ENCODE measurements at regions of chr12 and their contacts with region 1.

Region 1: DNA sequence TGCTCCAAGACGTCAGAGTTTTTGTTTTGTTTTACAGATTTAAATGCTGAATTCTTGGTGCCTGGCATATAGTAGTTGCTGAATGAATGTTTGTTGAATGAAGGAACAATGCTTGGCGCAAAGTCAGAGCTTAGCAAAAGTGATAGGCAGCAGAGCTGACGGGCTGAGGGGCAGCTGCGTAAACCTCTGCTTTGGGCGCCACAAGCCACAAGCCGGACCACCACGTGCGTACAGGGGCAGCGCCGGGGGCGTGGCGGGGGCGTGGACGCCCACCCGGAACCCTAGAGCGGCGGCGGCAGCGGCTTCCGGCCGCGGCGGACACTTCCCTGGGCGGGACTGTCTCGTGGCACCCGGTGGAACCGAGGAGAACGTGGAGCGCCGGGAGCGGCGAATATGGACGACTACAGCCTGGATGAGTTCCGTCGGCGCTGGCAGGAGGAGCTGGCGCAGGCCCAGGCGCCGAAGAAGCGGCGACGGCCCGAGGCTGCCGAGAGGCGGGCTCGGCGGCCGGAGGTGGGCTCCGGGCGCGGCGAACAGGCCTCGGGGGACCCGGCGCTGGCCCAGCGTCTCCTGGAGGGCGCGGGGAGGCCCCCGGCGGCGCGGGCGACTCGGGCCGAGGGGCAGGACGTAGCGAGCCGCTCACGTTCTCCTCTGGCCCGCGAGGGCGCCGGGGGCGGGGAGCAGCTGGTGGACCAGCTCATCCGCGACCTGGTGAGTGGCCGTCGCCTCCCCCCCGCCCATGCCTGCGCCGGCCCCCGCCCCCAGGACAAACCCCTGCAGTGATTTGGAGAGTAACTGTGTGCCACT is at the start of gene FBXW8:
- DNase-seq: peak; percentile 84
- H3K4me3 ChIP-seq: peak within 1 kb of the TSS; percentile 79
- H3K27ac ChIP-seq: peak within 1 kb of the TSS; percentile 46
- H3K4me1 ChIP-seq: peaks cover 20% of the 10 kb centered on the region
- CTCF ChIP-seq: no peak
- total RNA-seq, gene FBXW8: 22.4 and 34.0 TPM in 2 replicates

Region 2: DNA sequence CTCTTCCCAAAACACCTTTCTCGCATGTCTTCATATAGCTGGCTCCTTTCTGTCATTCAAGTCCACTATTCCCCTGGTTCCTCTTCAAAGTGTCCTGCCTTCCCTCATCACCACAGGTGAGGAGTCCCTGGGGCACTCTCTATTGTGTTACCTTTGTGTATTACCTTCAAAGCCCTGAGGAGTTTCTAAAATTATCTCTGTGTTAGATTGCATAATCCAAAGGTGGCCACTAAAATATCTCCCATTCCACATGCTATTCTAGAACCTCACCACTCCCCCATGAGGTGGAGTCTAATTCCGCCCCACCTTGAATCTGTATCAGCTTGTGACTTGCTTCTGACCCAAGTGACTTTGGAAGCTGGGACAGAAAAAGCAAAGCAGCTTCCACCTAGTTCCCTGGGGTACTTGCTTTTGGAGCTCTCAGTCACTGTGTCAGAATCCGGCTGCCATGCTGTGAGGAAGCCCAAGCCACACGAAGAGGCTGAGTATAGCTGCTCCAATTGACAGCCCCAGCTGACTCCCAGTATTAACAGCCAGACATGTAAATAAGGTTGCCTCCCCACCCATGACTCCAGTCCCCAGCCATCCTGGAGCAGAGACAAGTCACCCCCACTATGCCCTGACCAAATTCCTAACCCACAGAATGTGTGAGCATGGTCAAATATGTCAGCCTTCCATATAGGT is 36.4 kb before region 1 on chr12:
- CTCF ChIA-PET with region 1: no interaction called
- POLR2A ChIA-PET with region 1: no interaction called
- intact Hi-C with region 1: no loop called
- DNase-seq: no peak
- H3K4me3 ChIP-seq: no peak overlapping the region
- H3K27ac ChIP-seq: no peak overlapping the region
- H3K4me1 ChIP-seq: peaks cover 29% of the 10 kb centered on the region
- CTCF ChIP-seq: no peak

Region 3: DNA sequence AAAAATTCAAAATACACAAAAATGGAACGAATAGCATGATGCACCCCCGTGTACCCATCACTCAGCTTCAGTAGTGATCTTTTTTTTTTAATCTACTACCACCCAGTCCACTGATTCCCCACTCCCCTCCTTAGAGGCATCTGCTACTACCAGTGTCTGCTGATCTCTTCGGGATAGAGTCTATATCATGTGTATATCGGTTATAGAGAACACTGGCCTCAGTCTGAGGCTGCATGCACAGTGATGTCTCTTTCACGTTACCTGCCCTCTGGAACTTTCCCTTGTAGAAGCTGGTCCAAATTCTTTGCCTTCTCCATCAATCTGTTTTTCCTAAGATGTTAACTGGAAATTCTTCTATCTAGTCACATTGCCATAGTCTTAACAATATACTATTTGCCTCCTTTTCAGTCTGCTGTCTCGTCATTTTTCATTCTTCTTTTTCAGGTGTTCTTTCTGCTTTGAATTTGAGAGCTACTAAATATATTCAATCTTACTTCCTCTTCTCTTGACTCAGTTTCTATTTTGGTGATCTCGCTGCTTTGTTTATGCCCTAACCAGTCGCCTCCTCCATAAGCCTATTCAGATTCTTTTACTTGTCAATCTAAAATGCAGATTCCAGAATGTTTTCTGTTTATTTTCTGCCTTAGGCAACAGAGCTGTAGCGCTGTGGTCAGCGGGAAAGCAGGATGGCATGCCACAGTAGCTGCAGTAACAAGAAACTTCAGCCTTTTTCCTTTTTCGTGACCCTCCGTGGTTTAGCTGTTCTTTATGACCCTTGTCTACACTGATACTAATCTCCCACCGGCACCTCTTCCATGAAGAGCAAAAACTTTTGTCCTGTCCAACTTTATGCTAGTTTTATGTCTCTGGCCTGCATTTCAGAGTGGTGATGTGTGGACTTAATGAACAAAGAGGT is 66.9 kb after region 1 on chr12:
- CTCF ChIA-PET with region 1: no interaction called
- POLR2A ChIA-PET with region 1: interaction called, 3 read pairs
- intact Hi-C with region 1: loop called (anchors 2 kb)
- DNase-seq: peak; percentile 77
- H3K4me3 ChIP-seq: peak overlapping the region; percentile 66
- H3K27ac ChIP-seq: peak overlapping the region; percentile 87
- H3K4me1 ChIP-seq: peaks cover 56% of the 10 kb centered on the region
- CTCF ChIP-seq: no peak

Measured in OCI-LY7 (cell line).